ENCODE measurements at regions of chr2 and their contacts with region 1.

Region 1: DNA sequence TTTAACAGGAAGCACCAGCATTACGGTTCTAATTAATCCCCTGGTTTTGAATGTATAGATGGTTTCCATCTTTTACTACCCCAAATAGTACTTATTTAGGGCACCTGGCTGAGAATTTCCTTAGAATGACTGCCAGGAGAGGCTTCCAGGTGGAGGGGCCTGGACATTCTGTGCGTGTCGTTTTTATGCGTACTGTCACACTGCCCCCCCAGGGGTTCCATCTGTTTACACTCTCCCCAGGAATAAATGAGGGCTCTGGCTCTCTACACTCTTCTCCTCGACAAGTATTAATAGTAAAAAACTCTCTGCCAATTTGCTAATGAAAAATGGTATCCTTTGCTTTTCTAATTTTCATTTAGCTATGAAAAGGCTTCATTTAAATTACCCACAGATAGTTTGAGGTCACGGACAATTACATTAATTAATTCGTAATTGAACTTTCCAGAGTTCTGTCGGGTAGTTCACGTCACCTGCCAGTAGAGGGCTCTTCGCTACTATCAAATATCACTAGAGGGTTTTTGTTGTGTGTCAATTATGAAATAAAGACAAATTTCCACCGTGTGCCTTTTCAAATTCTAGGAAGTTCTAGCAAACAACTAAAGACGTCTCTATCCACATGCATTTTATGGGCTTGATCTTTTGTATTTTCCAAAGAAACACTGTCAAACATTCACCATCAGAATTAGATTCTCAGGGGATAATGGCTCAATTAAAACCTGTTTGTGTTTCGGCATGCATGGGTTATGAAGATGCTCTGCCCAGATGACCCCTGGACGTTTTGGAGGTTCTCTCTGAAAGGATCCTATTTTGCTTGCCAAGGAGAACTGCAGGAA is 88.8 kb upstream of the ASB18 start:
- DNase-seq: no peak
- H3K4me3 ChIP-seq: no peak overlapping the region
- H3K27ac ChIP-seq: no peak overlapping the region
- H3K27me3 ChIP-seq: peaks cover 3% of the 10 kb centered on the region
- CTCF ChIP-seq: peak; percentile 82

Region 2: DNA sequence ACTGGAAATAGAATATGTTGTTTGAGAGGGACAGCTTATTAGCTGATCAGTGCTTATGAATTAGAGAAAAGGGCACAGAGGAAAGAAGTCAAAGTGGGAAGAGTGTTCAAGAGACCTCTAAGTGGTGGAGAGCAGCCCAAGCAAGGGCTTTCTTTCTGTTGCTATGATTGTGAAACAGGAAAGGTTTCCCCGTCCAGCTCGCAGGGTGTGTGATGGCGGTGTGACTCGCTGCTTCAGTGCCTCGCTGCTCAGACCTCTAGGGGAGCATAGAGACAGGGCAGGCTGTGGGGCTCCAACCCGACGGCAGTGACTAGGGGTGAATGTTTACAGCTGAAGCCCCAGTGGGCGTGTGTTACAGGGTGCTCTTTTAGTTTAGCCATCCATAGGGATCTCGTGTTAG is 566.2 kb after region 1 on chr2:
- CTCF ChIA-PET with region 1: no interaction called
- POLR2A ChIA-PET with region 1: no interaction called
- DNase-seq: no peak
- H3K4me3 ChIP-seq: no peak overlapping the region
- H3K27ac ChIP-seq: no peak overlapping the region
- H3K27me3 ChIP-seq: peaks cover 7% of the 10 kb centered on the region
- CTCF ChIP-seq: no peak

Region 3: DNA sequence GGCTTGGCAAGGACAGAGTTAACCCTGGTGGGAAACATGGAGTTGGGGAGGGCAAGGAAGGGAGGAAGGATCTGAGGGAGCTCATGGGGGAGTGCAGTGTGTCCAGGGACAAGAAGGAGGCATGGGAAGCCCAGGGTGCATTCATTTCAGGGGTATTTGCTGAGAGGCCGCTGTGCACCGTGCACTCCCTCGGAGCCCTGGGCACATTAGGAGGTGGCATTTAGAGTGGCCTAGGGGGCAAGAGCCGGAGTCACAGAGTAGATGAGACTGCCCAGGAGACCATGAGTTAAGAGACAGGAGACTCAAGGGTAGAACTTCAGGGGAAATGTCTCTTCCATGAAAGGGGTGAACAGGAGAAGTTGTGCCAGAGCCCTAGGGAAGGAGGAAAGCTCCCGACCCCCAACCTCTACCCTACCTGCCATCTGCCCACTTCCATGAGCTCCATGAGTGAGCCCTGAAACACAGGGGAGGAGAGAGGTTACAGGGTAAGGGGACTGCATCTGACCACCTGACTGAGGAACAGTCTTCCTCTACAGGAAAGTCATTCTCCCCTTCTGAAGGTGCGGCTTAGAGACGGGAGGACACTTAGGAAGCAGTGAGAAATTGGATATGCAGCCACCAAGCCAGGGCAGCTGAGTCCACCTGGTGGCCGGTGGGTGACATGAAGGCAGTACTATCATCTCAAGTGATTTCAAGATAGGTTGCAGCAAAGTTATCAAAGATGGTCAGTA is 674.2 kb after region 1 on chr2:
- CTCF ChIA-PET with region 1: interaction called, 11 read pairs
- POLR2A ChIA-PET with region 1: no interaction called
- DNase-seq: peak; percentile 16
- H3K4me3 ChIP-seq: no peak overlapping the region
- H3K27ac ChIP-seq: no peak overlapping the region
- H3K27me3 ChIP-seq: no peaks in the 10 kb centered on the region
- CTCF ChIP-seq: peak; percentile 76

Region 4: GRCh38 chr2:237072067-237072931 is 719.3 kb after region 1 on chr2:
- CTCF ChIA-PET with region 1: interaction called, 11 read pairs
- POLR2A ChIA-PET with region 1: no interaction called
- DNase-seq: no peak
- H3K4me3 ChIP-seq: no peak overlapping the region
- H3K27ac ChIP-seq: no peak overlapping the region
- H3K27me3 ChIP-seq: no peaks in the 10 kb centered on the region
- CTCF ChIP-seq: peak; percentile 89